PC-9 (cell line): ENCODE measurements at regions of chr10 and their contacts with region 1.

Region 1: GRCh38 chr10:22325272-22326144 is 4.6 kb downstream of the BMI1 start:
- DNase-seq: peak; percentile 34 to 79
- H3K4me3 ChIP-seq: peak overlapping the region; percentile 79
- H3K27ac ChIP-seq: peak overlapping the region; percentile 29; the same call in 1 of the 2 replicates
- H3K4me1 ChIP-seq: peaks cover 27% of the 10 kb centered on the region
- H3K27me3 ChIP-seq: peaks cover 16% of the 10 kb centered on the region
- CTCF ChIP-seq: no peak

Region 2: GRCh38 chr10:22218451-22218850 is 107.1 kb before region 1 on chr10:
- CTCF ChIA-PET with region 1: no interaction called
- POLR2A ChIA-PET with region 1: no interaction called
- intact Hi-C with region 1: no loop called
- DNase-seq: no peak
- H3K4me3 ChIP-seq: no peak overlapping the region
- H3K27ac ChIP-seq: no peak overlapping the region
- H3K4me1 ChIP-seq: no peaks in the 10 kb centered on the region
- H3K27me3 ChIP-seq: no peaks in the 10 kb centered on the region
- CTCF ChIP-seq: no peak

Region 3: GRCh38 chr10:22308390-22308789 is 17.1 kb before region 1 on chr10:
- CTCF ChIA-PET with region 1: no interaction called
- POLR2A ChIA-PET with region 1: no interaction called
- intact Hi-C with region 1: no loop called
- DNase-seq: peak in 1 of 2 experiments; percentile 51
- H3K4me3 ChIP-seq: no peak overlapping the region
- H3K27ac ChIP-seq: 0 out of 2 replicates have a peak overlapping the region, but pooled peaks have one; percentile 10
- H3K4me1 ChIP-seq: no peaks in the 10 kb centered on the region; the same call in 1 of the 2 replicates
- H3K27me3 ChIP-seq: no peaks in the 10 kb centered on the region
- CTCF ChIP-seq: no peak

Region 4: DNA sequence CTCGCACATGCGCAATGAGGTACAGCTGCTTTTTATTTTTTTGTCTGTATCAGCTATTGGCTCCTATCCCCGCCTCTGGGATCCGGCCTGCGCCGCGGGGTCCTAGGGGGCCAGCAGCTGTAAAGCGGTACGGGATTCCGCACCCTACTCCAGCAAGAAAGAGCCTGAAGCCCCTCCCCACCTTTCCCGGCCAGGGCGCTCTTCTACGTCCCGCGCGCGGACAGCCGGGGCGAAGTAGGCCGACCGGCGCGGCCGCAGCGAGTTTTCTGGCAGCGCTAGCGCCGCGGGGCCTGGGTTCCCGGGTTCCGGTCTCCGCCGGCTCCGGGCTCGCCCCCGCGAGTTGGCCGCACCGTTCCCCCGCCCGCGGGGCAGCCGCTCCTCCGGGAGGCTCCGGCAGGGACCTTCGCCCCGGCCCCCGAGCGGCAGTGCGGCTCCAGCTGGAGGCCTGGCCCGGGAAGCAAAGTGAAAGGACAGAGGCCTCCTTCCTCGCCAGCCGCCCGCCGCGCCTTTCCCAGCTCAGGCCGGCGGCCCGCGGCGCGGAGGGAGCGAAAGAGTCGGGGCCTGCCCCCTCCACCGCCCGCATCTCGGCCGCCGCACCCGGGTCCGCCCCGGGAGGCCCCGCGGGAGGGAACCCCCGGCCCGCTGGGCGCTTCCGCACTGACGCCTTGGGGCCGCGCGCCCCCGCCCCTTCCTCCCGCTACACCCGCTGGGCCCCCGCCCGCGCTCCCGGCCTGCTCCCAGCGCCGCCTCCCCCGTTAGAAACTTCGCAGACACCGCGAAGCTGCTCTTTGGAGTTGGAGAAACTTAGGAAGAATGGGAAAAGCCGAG is 15.1 kb after region 1 on chr10:
- CTCF ChIA-PET with region 1: no interaction called
- POLR2A ChIA-PET with region 1: interaction called, 18 read pairs
- intact Hi-C with region 1: no loop called
- DNase-seq: peak in 1 of 2 experiments; percentile 72
- H3K4me3 ChIP-seq: peak overlapping the region; percentile 84
- H3K27ac ChIP-seq: peak overlapping the region; percentile 61
- H3K4me1 ChIP-seq: peaks cover 6% of the 10 kb centered on the region; the same call in 1 of the 2 replicates
- H3K27me3 ChIP-seq: no peaks in the 10 kb centered on the region
- CTCF ChIP-seq: no peak

Region 5: DNA sequence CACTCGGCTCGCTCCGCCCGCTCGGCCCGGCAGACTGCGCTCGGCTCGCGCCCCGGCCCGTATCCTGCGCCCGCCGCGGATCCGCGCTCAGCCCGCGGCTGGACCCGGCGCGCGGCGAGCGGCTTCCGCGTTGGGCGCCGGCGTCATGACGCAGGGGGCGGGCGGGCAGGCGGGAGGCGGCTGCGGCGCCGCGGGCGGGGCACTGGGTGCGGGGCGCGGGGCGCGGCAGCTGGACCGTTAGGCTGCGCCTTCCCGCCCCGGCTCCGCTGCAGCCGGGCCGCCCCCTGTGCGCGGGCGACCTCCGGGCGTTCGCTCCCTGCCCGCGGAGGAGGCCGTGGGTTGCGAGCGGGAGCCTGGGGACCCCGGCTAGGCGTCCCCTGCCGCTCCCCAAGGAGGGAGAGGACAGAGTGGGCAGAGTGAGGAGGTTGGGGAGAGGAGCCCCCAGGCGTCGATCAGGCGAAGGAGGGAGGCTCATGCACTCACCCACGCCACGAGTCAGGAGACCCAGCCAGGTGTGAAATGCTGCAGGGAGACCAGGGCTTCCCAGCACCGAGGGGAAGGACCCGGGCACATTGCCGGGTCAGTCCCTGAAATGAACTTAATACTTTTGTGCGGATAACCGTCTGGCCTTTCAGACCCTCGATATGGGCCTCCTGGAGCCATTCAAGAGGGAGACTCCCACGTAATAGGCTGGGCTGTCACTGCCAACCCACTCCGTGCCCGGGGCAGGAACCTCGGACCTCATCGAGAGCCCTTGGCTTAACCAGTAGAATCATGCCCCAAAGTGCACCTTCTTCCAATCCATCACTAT is 389.2 kb after region 1 on chr10 and contains the start of gene PIP4K2A:
- CTCF ChIA-PET with region 1: no interaction called
- POLR2A ChIA-PET with region 1: no interaction called
- intact Hi-C with region 1: loop called (anchors 10 kb)
- DNase-seq: peak in 1 of 2 experiments; percentile 69
- H3K4me3 ChIP-seq: peak within 1 kb of the TSS; percentile 85
- H3K27ac ChIP-seq: no peak within 1 kb of the TSS
- H3K4me1 ChIP-seq: peaks cover 12% of the 10 kb centered on the region
- H3K27me3 ChIP-seq: no peaks in the 10 kb centered on the region
- CTCF ChIP-seq: no peak
- total RNA-seq, gene PIP4K2A: 16.1 and 21.4 TPM in 2 replicates

Region 6: GRCh38 chr10:23067939-23068775 is 742.6 kb after region 1 on chr10:
- CTCF ChIA-PET with region 1: no interaction called
- POLR2A ChIA-PET with region 1: no interaction called
- intact Hi-C with region 1: loop called (anchors 10 kb)
- DNase-seq: peak; percentile 43 to 59
- H3K4me3 ChIP-seq: no peak overlapping the region
- H3K27ac ChIP-seq: no peak overlapping the region
- H3K4me1 ChIP-seq: no peaks in the 10 kb centered on the region
- H3K27me3 ChIP-seq: no peaks in the 10 kb centered on the region
- CTCF ChIP-seq: peak; percentile 84